ENCODE measurements at regions of chr7 and their contacts with region 1.

Region 1: GRCh38 chr7:33932832-33933468 is 27.6 kb downstream of the BMPER start:
- DNase-seq: peak; percentile 64 to 75
- H3K4me3 ChIP-seq: no peak overlapping the region
- H3K4me3 Mint-ChIP-seq: no peak overlapping the region
- H3K27ac Mint-ChIP-seq: no peak overlapping the region
- H3K4me1 ChIP-seq: no peaks in the 10 kb centered on the region
- H3K4me1 Mint-ChIP-seq: no peaks in the 10 kb centered on the region
- H3K27me3 ChIP-seq: no peaks in the 10 kb centered on the region
- H3K27me3 Mint-ChIP-seq: peaks cover 21% of the 10 kb centered on the region
- CTCF ChIP-seq: peak; percentile 81 to 95

Region 2: GRCh38 chr7:33185786-33186185 is 747.2 kb before region 1 on chr7:
- CTCF ChIA-PET with region 1: interaction called, 3 read pairs
- POLR2A ChIA-PET with region 1: no interaction called
- intact Hi-C with region 1: loop called (anchors 1 kb)
- DNase-seq: peak in 1 of 2 experiments; percentile 41
- H3K4me3 ChIP-seq: no peak overlapping the region
- H3K4me3 Mint-ChIP-seq: no peak overlapping the region
- H3K27ac Mint-ChIP-seq: no peak overlapping the region
- H3K4me1 ChIP-seq: no peaks in the 10 kb centered on the region
- H3K4me1 Mint-ChIP-seq: no peaks in the 10 kb centered on the region
- H3K27me3 ChIP-seq: no peaks in the 10 kb centered on the region
- H3K27me3 Mint-ChIP-seq: peaks cover 2% of the 10 kb centered on the region
- CTCF ChIP-seq: peak; percentile 55 to 68

Region 3: DNA sequence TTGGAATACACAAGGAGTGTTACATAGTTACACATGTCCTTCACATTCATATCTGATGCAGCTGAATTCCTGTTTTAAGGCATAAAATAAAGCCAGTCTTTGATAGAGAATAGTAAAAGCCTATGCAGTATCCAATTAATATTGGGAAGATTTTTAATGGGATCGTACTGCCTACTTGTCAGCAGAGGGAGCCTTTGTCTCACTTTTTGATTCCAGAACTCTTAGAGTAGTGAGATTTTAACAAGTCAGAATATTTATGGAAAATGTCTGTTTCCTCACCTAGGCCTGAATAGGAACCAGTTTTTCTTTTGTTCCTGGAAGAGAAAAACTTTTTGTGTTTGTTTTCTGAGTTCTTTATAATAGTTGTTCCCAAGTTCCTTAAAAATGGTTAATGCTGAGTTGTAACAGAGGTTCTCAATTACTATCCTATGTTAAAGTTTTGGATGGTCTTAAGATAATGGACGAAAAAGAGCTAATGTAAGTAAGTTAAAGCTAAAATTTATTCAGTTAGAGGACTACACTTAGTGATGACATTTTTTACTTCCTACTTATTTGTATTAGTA is 689.5 kb before region 1 on chr7:
- CTCF ChIA-PET with region 1: interaction called, 3 read pairs
- POLR2A ChIA-PET with region 1: no interaction called
- intact Hi-C with region 1: loop called (anchors 1 kb)
- DNase-seq: peak in 1 of 2 experiments; percentile 15
- H3K4me3 ChIP-seq: no peak overlapping the region
- H3K4me3 Mint-ChIP-seq: no peak overlapping the region
- H3K27ac Mint-ChIP-seq: no peak overlapping the region
- H3K4me1 ChIP-seq: no peaks in the 10 kb centered on the region
- H3K4me1 Mint-ChIP-seq: no peaks in the 10 kb centered on the region
- H3K27me3 ChIP-seq: no peaks in the 10 kb centered on the region
- H3K27me3 Mint-ChIP-seq: peaks cover 3% of the 10 kb centered on the region
- CTCF ChIP-seq: peak; percentile 56 to 68

Region 4: DNA sequence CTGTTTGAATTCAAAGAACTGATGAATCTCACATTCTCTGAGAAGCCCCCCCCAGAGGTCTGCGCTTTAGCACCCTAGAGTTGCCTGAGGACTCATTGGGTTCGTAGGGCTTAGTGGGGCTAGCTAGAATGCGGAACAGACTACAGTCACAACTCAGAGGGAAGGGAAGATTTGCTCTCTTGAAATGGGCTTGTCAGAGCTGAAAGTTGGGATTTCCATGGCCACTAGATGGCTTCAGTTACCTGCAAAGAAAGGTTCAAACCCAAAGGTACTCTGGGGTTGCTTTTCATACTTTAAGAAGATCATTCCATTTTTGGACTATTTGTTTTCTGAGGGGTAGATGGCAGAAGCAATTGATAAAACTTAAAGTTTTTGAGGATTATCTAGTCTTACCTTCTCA is 598.6 kb before region 1 on chr7:
- CTCF ChIA-PET with region 1: interaction called, 7 read pairs
- POLR2A ChIA-PET with region 1: no interaction called
- intact Hi-C with region 1: loop called (anchors 1 kb)
- DNase-seq: peak in 1 of 2 experiments; percentile 33
- H3K4me3 ChIP-seq: no peak overlapping the region
- H3K4me3 Mint-ChIP-seq: no peak overlapping the region
- H3K27ac Mint-ChIP-seq: no peak overlapping the region
- H3K4me1 ChIP-seq: no peaks in the 10 kb centered on the region
- H3K4me1 Mint-ChIP-seq: no peaks in the 10 kb centered on the region
- H3K27me3 ChIP-seq: no peaks in the 10 kb centered on the region; the same call in 1 of the 2 replicates
- H3K27me3 Mint-ChIP-seq: peaks cover 8% of the 10 kb centered on the region
- CTCF ChIP-seq: peak; percentile 30 to 58

Region 5: DNA sequence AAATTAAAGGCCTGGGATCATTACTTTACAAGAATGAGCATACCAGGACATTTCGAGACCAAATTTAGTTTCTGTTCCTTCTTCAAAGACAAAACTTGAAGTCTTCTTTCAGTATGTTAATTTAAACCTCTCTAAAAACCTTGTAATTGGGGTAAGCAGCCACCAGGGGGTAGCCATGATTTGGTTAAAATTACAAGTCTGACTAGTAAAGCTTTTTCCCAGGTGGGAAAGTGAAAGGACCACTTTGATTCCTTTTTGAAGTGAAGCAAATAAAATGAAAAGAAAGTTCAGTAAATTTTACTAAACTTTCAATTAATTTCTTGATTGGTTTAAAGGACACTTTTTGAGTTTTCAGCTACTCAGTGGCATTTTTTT is 509.3 kb before region 1 on chr7:
- CTCF ChIA-PET with region 1: no interaction called
- POLR2A ChIA-PET with region 1: no interaction called
- intact Hi-C with region 1: loop called (anchors 1 kb)
- DNase-seq: peak in 1 of 2 experiments; percentile 15
- H3K4me3 ChIP-seq: no peak overlapping the region
- H3K4me3 Mint-ChIP-seq: no peak overlapping the region
- H3K27ac Mint-ChIP-seq: no peak overlapping the region
- H3K4me1 ChIP-seq: no peaks in the 10 kb centered on the region
- H3K4me1 Mint-ChIP-seq: no peaks in the 10 kb centered on the region
- H3K27me3 ChIP-seq: no peaks in the 10 kb centered on the region
- H3K27me3 Mint-ChIP-seq: peaks cover 2% of the 10 kb centered on the region
- CTCF ChIP-seq: peak; percentile 22 to 40

Region 6: GRCh38 chr7:33744293-33745075 is 188.5 kb before region 1 on chr7:
- CTCF ChIA-PET with region 1: no interaction called
- POLR2A ChIA-PET with region 1: no interaction called
- intact Hi-C with region 1: no loop called
- DNase-seq: no peak
- H3K4me3 ChIP-seq: no peak overlapping the region
- H3K4me3 Mint-ChIP-seq: no peak overlapping the region
- H3K27ac Mint-ChIP-seq: no peak overlapping the region
- H3K4me1 ChIP-seq: no peaks in the 10 kb centered on the region
- H3K4me1 Mint-ChIP-seq: no peaks in the 10 kb centered on the region
- H3K27me3 ChIP-seq: no peaks in the 10 kb centered on the region
- H3K27me3 Mint-ChIP-seq: peaks cover 9% of the 10 kb centered on the region
- CTCF ChIP-seq: no peak

Region 7: GRCh38 chr7:33757562-33758165 is 175.3 kb before region 1 on chr7:
- CTCF ChIA-PET with region 1: interaction called, 3 read pairs
- POLR2A ChIA-PET with region 1: no interaction called
- intact Hi-C with region 1: loop called (anchors 2 kb)
- DNase-seq: peak in 1 of 2 experiments; percentile 39
- H3K4me3 ChIP-seq: no peak overlapping the region
- H3K4me3 Mint-ChIP-seq: no peak overlapping the region
- H3K27ac Mint-ChIP-seq: no peak overlapping the region
- H3K4me1 ChIP-seq: 0 out of 2 replicates have a peak, but pooled peaks cover 8% of the 10 kb centered on the region
- H3K4me1 Mint-ChIP-seq: peaks cover 8% of the 10 kb centered on the region
- H3K27me3 ChIP-seq: no peaks in the 10 kb centered on the region
- H3K27me3 Mint-ChIP-seq: peaks cover 3% of the 10 kb centered on the region
- CTCF ChIP-seq: peak; percentile 44 to 51

Region 8: GRCh38 chr7:33921216-33921938 is 11.6 kb before region 1 on chr7:
- CTCF ChIA-PET with region 1: interaction called, 13 read pairs
- POLR2A ChIA-PET with region 1: no interaction called
- intact Hi-C with region 1: no loop called
- DNase-seq: no peak
- H3K4me3 ChIP-seq: no peak overlapping the region
- H3K4me3 Mint-ChIP-seq: no peak overlapping the region
- H3K27ac Mint-ChIP-seq: no peak overlapping the region
- H3K4me1 ChIP-seq: no peaks in the 10 kb centered on the region
- H3K4me1 Mint-ChIP-seq: no peaks in the 10 kb centered on the region
- H3K27me3 ChIP-seq: no peaks in the 10 kb centered on the region
- H3K27me3 Mint-ChIP-seq: peaks cover 11% of the 10 kb centered on the region
- CTCF ChIP-seq: no peak

Measured in Caco-2 (cell line).